Head of caudate nucleus (tissue), 42 donors: ENCODE measurements at regions of chr21 and their contacts with region 1.

Region 1: GRCh38 chr21:29164325-29164942 is 34.0 kb downstream of the MAP3K7CL start:
- DNase-seq: peak in 6 of 42 donors; percentile 15 to 52 (median 35)

Region 2: GRCh38 chr21:29217818-29218291 is 53.4 kb after region 1 on chr21:
- intact Hi-C with region 1: no loop called
- DNase-seq: no peak

Region 3: DNA sequence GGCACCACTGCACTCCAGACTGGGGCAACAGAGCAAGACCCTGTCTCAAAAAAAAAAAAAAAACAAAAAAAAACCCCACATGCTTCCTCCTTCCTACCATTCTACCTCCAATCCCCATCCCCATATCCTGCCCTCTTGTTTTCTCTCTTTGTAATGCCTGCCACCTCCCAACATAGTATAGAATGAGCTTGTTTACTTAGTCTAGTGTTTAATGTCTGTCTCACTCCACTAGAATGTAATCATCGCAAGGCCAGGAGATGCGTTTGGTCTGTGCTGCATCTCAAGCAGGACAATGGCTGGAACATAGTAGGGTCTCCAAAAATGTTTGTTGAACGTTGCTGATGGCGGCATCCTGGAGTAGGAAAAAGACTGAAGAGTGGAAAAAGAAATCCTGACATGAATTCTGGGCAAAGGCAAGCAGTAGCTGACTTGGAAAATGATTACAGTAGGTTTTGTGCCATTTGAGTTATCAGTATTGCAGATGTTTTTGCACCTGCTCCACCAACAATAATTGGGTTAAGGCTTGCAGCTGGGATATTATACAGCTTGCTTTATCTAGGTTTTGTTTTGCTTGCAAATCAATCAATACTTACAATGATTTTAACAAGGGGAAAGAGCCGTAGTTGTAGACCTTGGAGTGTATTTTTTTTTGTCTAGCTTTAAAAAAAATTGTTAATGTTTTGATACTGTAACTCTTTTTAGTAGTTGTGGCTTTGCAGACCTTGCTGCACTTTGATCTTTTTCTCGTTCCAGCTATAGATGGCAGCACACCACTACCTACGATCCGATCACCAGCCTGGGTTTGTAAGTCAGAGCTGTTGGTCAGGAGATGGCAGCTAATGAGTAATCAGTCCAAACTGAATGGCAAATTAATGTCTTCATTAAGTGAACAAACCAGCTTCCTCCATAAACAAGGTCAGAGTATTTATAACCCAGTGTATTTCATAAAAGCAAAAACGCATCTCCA is 196.6 kb after region 1 on chr21:
- intact Hi-C with region 1: loop called (anchors 10 kb)
- DNase-seq: peak in 29 of 42 donors; percentile 12 to 73 (median 36)